Colonic mucosa (tissue), 4 donors: ENCODE measurements at regions of chr19 and their contacts with region 1.

Region 1: DNA sequence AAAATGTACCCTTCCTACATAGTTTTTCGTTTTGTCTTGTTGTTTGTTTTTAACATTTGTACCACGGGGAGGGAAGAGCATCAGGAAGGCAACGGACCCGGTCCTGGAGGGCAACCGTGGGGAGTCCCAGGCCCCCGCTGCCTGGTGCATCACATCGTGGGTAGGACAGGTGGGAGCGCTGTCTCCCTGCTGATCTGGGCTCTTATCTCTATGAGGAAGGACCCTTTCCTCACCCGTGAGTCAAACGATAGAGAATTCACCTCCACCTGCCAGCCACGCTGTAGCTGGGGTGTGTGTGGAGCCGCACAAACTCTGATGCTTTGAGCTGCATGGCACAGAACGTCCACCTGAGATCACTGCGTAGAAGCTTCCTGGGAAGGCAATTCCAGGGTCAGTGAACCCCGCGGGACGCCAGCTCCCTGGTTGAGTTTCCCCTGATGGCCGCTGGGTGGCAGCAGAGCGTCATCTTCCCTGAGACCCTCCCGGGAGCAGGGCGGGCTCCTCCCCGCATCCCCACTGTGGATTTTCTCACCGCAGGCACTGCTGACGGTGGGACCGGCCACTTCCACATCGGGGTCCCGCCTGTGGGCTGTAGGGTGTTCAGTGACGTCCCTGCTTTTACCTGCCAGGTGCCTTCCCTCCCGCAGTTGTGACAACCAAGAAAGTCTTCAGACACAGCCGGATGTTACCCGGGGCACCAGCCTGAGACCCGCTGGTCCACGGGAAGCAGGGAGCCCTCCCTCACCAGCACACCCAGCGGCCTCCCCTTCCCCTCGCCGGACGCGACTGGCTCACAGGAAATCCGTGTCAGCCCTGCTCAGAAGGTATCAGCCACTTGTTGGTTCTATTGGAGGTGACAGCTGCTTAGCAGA is 54.7 kb downstream of the ZNF787 start:
- DNase-seq: peak; percentile 69
- H3K4me3 ChIP-seq: no peak overlapping the region
- H3K27ac ChIP-seq: no peak overlapping the region
- H3K4me1 ChIP-seq: no peaks in the 10 kb centered on the region
- H3K27me3 ChIP-seq: no peaks in the 10 kb centered on the region
- CTCF ChIP-seq: peak; percentile 87

Region 2: DNA sequence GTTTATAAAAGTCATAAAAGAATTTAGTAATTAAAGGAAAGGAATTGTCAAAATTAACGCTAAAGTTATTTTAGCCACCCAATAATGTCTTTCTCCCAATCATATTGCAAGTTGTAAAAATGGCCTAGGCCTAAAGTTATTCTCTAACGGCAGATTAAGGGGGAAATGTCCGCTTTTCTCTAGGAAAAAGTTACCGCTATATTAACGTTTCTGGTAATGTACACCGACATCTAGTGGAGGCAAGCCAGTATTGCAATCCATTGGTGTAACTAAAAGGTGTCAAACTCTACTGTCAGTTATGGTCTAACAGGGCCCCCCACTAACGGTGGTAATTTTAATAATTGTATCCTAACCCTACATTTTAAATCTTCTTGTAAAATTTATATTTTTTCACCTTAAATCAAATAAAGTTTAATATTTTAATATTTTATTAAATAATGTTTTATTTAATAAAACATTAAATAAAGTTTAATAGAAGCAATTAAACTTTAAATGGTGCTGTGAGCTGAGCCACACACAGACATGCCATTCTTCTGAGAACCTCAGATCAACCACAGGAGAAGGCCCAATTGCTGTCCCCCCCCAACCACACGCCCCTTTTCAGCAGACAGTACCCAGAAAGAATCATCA is 284.1 kb after region 1 on chr19:
- intact Hi-C with region 1: loop called (anchors 5 kb)
- DNase-seq: peak; percentile 49
- H3K4me3 ChIP-seq: no peak overlapping the region
- H3K27ac ChIP-seq: no peak overlapping the region
- H3K4me1 ChIP-seq: no peaks in the 10 kb centered on the region
- H3K27me3 ChIP-seq: no peaks in the 10 kb centered on the region
- CTCF ChIP-seq: peak; percentile 96